ENCODE measurements at regions of chr15 and their contacts with region 1.

Region 1: GRCh38 chr15:47987908-47988532 is 132.8 kb upstream of the SLC24A5 start:
- DNase-seq: peak; percentile 23
- H3K4me3 ChIP-seq: no peak overlapping the region
- CTCF ChIP-seq: peak; percentile 56

Region 2: DNA sequence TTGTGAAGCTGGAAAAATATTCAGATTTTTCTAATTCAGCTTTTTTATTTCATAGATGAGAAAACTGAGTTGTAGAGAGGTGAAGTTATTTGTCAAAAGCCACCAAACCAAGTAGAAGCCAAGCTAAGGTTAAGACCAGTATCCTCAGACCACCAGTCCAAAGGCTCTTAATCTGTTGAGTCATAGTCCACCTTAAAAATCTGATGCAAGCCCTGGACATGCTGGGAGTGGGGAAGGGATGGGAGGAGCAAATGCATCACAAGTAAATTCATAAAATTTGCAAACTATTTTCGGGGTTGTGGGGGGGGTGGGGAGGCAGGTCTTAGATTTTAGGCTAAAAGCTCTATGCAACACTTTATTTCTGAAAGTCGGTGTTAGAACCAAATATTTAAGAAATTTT is 578.4 kb before region 1 on chr15:
- CTCF ChIA-PET with region 1: no interaction called
- POLR2A ChIA-PET with region 1: no interaction called
- DNase-seq: no peak
- H3K4me3 ChIP-seq: no peak overlapping the region
- CTCF ChIP-seq: no peak

Region 3: DNA sequence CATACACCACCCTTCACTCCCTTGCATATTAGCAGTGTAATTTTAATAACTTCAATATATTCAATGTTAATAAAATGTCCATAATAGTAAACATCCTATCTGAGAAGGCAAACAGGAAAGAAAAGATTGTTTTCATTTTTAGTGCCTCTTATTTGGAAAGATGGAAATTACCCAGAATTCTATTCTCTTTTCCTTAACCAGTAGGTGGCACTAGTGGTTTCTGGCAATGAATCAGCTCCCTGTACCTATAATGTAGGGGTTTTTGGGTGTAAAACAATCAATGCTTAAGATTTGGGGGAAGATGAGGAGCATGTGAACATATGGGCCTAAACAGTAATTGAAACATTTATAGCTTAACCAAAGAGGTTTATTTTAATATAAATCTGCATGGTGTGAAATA is 276.4 kb before region 1 on chr15:
- CTCF ChIA-PET with region 1: interaction called, 34 read pairs
- POLR2A ChIA-PET with region 1: no interaction called
- DNase-seq: no peak
- H3K4me3 ChIP-seq: no peak overlapping the region
- CTCF ChIP-seq: peak; percentile 32

Region 4: DNA sequence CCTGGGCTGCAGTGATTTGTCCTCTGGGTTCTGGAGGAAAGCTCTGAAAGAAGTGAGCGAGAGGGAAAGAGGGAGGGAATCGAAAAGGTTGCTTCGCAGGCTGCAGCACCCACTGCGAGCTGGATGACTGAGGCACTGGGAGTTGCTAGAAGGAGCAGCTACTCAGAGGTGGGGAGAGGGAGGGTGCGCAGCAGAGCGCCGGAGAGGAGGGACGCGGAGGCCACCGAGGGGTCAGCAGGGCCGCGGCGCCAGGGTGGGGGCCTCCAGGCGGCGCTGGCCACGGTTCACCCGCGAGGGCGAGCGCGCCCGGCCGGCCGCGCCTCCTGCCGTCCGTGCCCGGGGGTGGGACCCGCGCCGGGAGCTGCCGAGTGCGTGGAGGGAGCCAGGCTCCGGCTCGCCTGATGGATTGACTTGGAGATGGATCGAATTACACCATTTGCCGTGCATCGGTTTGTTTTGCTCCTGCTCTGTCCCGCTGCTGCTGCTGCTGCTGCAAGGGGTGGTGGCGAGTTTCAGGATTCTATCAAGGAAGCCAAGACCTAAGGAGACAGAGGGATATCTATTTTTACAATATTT is 270.9 kb before region 1 on chr15 and contains the start of gene SEMA6D:
- CTCF ChIA-PET with region 1: interaction called, 34 read pairs
- POLR2A ChIA-PET with region 1: no interaction called
- DNase-seq: peak; percentile 21
- H3K4me3 ChIP-seq: peak within 1 kb of the TSS; percentile 70
- CTCF ChIP-seq: peak; percentile 29

Measured in AG04449 (cell line).